Head of caudate nucleus (tissue), 42 donors: ENCODE measurements at regions of chr4 and their contacts with region 1.

Region 1: GRCh38 chr4:22398671-22399070 is 117.2 kb downstream of the ADGRA3 start:
- DNase-seq: no peak

Region 2: DNA sequence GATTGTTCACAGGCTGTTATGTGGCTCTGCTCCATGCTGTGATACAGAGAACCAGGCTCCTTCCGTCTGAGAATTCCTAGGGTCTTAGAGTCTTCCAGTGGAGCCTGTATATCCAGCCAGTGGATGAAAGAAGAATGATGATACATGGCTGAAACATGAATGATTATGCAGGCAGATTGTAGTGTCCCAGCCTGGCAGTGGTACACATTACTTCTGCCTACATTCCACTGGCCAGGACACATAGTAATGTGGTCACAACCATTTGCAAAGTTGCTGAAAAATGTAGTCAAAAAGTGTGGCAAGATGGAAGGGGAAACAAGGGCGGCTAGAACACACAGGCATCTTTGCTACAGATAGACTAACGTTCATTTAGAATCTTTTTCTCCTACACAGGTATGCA is 289.6 kb after region 1 on chr4:
- intact Hi-C with region 1: loop called (anchors 5 kb)
- DNase-seq: no peak